ENCODE measurements at regions of chr11 and their contacts with region 1.

Region 1: DNA sequence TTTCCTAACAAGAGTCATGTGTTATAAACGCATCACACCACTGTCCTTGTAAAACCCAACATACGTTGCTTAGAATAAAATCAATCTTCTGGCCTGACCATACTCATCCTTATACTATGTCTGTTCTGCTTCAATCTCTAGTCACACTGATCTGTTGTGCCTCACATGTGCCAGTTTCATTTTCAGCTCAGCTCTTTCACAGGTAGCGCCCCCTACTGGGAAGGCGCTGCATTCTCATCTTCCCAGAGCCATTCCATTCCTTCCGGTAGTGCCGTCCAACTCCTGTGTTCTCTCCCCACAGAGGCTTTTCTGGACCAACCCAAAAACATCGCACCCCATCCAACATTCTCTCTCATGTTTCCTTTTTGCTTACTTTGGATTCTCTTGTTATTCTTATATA is 22.2 kb downstream of the CASP5 start:
- DNase-seq: peak; percentile 71
- ATAC-seq: peak; percentile 90
- H3K4me3 Mint-ChIP-seq: no peak overlapping the region
- H3K27ac Mint-ChIP-seq: peak overlapping the region; percentile 59
- H3K4me1 Mint-ChIP-seq: peaks cover 5% of the 10 kb centered on the region
- H3K27me3 Mint-ChIP-seq: no peaks in the 10 kb centered on the region

Region 2: DNA sequence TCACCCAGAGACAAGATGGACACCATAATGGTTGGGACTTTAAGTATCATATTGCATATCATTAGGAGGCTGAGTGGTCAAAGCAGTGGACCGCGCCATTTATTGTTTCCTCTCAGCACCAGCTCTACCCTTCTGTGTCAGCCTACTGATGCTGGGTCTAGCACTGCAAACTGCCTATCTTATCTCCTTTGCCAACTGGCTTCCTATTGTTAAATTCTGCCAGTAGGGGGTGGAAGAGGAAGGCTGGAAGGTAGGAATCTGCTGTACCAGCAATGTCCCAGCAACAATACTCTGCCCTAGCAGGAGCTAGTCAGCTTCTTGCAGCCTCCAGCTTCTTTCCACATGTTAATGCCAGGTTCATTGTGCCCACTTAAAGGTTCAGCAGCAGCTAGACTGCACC is 469.7 kb before region 1 on chr11:
- CTCF ChIA-PET with region 1: no interaction called
- POLR2A ChIA-PET with region 1: no interaction called
- intact Hi-C with region 1: loop called in 1 of 2 experiments (anchors 5 kb)
- DNase-seq: peak; percentile 12
- ATAC-seq: peak; percentile 72
- H3K4me3 Mint-ChIP-seq: no peak overlapping the region
- H3K27ac Mint-ChIP-seq: no peak overlapping the region
- H3K4me1 Mint-ChIP-seq: no peaks in the 10 kb centered on the region
- H3K27me3 Mint-ChIP-seq: peaks cover 4% of the 10 kb centered on the region

Region 3: DNA sequence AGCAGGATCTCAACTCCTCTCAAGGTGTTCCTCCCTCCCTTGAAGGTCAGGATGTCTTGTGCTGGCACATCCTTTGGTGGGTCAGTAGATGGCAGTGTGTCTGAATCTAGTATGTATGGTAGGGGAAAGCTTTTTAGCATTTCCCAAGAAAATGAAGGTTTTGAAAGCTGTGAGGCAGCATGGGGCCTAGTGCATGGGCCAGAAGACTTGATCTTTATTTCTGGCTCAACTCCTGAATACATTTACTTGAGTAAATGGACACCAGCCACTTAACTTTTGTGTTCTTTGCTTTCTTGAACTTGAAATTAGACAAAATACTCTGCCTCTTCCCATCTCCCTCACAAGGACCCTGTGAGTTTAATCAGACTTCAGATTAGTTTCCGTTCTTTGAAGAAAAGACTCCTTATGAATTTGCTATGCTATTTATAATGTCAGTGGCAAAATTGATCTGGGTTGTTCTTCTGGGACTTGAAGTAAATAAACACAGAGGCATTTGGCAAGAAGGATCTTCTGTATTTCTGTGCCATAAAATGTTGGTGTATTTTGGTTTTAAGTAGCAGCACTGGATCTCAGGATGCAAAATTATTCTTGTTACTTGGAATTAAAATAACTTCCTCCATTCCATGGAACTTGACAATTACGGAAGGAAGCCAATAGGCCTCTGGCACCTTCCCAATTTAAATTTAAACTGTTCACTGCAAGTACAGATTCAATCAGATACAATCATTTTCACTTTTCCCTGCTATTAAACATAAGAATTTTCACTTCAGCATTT is 391.3 kb before region 1 on chr11:
- CTCF ChIA-PET with region 1: no interaction called
- POLR2A ChIA-PET with region 1: no interaction called
- intact Hi-C with region 1: loop called (anchors 1 to 2 kb)
- DNase-seq: peak; percentile 41
- ATAC-seq: peak; percentile 96
- H3K4me3 Mint-ChIP-seq: no peak overlapping the region
- H3K27ac Mint-ChIP-seq: peak overlapping the region; percentile 32
- H3K4me1 Mint-ChIP-seq: peaks cover 20% of the 10 kb centered on the region
- H3K27me3 Mint-ChIP-seq: no peaks in the 10 kb centered on the region

Region 4: DNA sequence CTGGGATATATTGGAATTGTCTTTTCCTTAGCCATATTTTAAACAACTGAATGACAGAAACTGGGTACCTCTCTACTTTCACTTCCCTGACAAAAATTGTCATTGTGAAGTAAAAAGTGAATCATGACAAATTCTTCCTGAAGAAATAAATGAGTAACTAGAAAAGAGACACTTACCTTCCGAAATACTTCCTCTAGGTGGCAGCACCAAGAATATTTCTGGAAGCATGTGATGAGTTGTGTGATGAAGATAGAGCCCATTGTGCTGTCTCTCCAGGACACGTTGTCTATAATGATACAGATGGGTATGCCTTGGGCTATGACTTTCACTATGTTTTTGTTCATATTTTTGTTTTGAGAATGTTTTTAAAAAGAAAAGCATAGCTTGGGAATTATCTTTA is 53.9 kb before region 1 on chr11:
- CTCF ChIA-PET with region 1: interaction called, 3 read pairs
- POLR2A ChIA-PET with region 1: no interaction called
- intact Hi-C with region 1: loop called in 1 of 2 experiments (anchors 2 kb)
- DNase-seq: peak; percentile 32
- ATAC-seq: peak; percentile 96
- H3K4me3 Mint-ChIP-seq: no peak overlapping the region
- H3K27ac Mint-ChIP-seq: peak overlapping the region; percentile 37
- H3K4me1 Mint-ChIP-seq: peaks cover 10% of the 10 kb centered on the region
- H3K27me3 Mint-ChIP-seq: no peaks in the 10 kb centered on the region

Measured in activated CD4-positive, alpha-beta T cell treated with anti-CD3 and anti-CD28 coated beads for 36 hours (primary cell).